Heart left ventricle (tissue), 16 donors: ENCODE measurements at regions of chr9 and their contacts with region 1.

Region 1: GRCh38 chr9:115289757-115290208 is 171.8 kb upstream of the TNC start:
- DNase-seq: peak in 2 of 5 donors; percentile 13 to 27
- ATAC-seq: peak in 3 of 4 donors; percentile 26 to 87 (median 81)
- H3K4me3 ChIP-seq: no peak overlapping the region
- H3K27ac ChIP-seq: peak overlapping the region in 6 of 12 donors; percentile 5 to 61 (median 34)
- H3K4me1 ChIP-seq: peaks cover 0 to 26% (median 0%) of the 10 kb centered on the region in 12 donors
- H3K27me3 ChIP-seq: no peaks in the 10 kb centered on the region
- CTCF ChIP-seq: no peak
- POLR2A ChIP-seq: no peak

Region 2: DNA sequence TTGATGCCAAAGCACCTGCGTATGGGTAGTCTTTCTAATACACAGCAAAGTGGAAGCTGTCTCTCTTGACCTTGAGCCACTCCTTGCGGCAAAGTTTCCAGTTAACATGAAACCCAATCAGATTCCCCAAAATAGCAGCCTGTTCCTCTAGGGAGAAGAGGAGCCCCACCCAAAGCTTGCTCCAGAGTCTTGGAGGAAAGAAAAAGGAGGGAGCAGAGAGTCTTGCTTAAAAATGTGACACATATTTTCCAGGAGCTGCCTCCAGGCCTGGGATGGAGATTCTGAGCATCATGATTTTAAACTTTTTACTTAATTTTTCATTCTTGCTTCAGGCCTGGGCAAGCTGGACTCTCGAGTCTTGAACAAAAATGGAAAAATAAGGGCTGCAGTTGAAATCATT is 51.6 kb after region 1 on chr9:
- intact Hi-C with region 1: loop called in 1 of 10 experiments (anchors 10 kb)
- DNase-seq: peak in 3 of 5 donors; percentile 8 to 27 (median 21)
- ATAC-seq: peak; percentile 37 to 68 (median 54)
- H3K4me3 ChIP-seq: no peak overlapping the region
- H3K27ac ChIP-seq: no peak overlapping the region
- H3K4me1 ChIP-seq: peaks cover 0 to 8% (median 0%) of the 10 kb centered on the region in 12 donors
- H3K27me3 ChIP-seq: no peaks in the 10 kb centered on the region
- CTCF ChIP-seq: no peak
- POLR2A ChIP-seq: no peak